Uterus (tissue), 4 donors: ENCODE measurements at regions of chr3 and their contacts with region 1.

Region 1: GRCh38 chr3:12135029-12135657 is 23.6 kb downstream of the TIMP4 start:
- DNase-seq: peak; percentile 66 to 73
- H3K4me3 ChIP-seq: no peak overlapping the region
- H3K27ac ChIP-seq: peak overlapping the region in 1 of 2 donors; percentile 10
- H3K4me1 ChIP-seq: peaks cover 0 to 4% of the 10 kb centered on the region in 2 donors
- H3K27me3 ChIP-seq: no peaks in the 10 kb centered on the region
- CTCF ChIP-seq: peak; percentile 83 to 87 (median 85)
- POLR2A ChIP-seq: no peak

Region 2: GRCh38 chr3:11989383-11990038 is 145.6 kb before region 1 on chr3:
- intact Hi-C with region 1: no loop called
- DNase-seq: no peak
- H3K4me3 ChIP-seq: no peak overlapping the region
- H3K27ac ChIP-seq: no peak overlapping the region
- H3K4me1 ChIP-seq: no peaks in the 10 kb centered on the region
- H3K27me3 ChIP-seq: no peaks in the 10 kb centered on the region
- CTCF ChIP-seq: no peak
- POLR2A ChIP-seq: no peak

Region 3: DNA sequence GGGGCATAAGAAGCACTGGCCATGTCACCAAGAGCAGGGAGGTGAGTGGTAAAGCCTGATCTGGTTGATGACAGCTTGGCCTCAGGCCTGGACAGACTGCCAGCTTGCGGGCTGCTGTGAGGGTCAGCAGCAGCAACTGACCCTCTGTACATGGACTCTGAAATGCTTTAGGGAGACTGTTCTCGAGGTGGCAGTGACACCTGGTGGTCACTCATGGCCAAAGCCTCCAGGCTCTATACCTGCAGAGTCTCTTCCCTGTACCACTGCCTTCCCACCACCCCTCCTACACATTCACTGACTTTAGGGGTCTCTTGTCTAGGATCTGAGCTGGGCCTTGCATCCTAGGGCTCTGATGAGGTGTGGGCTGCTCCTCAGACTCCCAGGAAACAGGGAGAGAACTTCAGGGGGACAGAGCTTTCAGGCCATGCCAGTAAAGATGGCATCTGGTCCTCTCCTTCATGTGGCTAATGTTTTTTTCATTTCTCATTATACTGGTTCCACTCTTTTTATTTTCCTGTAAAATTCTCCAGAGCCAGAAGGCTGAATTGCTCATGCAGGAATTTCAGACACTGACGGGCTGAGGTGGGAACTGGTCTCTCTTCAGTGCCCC is 40.8 kb after region 1 on chr3:
- intact Hi-C with region 1: loop called (anchors 5 kb)
- DNase-seq: peak; percentile 54 to 67
- H3K4me3 ChIP-seq: no peak overlapping the region
- H3K27ac ChIP-seq: no peak overlapping the region
- H3K4me1 ChIP-seq: no peaks in the 10 kb centered on the region
- H3K27me3 ChIP-seq: no peaks in the 10 kb centered on the region
- CTCF ChIP-seq: peak; percentile 66 to 83 (median 74)
- POLR2A ChIP-seq: no peak

Region 4: DNA sequence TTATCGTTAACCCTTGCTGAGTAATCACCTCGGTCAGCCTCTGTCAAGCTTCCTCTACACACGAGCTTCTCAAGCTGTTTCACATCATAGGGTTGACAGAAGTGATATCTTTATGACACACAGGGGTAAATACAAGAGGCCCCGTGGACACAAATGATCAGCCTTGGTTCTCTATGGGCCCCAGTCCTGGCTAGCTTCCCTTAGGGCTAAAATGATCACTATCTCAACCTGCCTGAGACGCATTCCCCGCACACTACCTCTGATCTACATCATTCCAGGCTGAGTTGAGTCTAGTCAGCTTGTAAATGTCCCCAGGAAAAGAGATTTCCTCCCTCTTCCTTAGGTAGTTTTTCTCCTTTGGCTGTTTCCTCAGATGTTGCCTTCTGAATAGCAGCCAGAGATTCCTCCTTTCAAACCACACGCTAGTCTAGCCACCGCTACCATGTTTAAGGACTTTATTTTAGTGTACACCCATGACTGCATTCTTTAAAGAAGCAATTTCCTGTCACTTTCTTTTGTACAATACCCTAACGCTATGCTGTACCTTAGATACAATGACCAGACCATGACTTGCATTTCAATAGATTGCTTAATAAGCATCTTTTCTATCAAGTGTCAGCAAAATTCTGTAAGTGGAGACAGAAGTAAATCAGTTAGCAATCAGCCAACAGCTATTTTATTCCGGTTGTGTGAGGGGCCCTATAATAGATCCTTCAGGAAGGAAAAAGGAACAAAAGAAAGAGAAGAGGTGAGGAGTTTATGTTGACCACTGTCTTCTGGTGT is 118.6 kb after region 1 on chr3:
- intact Hi-C with region 1: no loop called
- DNase-seq: no peak
- H3K4me3 ChIP-seq: no peak overlapping the region
- H3K27ac ChIP-seq: no peak overlapping the region
- H3K4me1 ChIP-seq: no peaks in the 10 kb centered on the region
- H3K27me3 ChIP-seq: no peaks in the 10 kb centered on the region
- CTCF ChIP-seq: no peak
- POLR2A ChIP-seq: no peak

Region 5: GRCh38 chr3:12479919-12480425 is 344.8 kb after region 1 on chr3:
- intact Hi-C with region 1: loop called (anchors 5 kb)
- DNase-seq: peak in 1 of 2 donors; percentile 20
- H3K4me3 ChIP-seq: no peak overlapping the region
- H3K27ac ChIP-seq: no peak overlapping the region
- H3K4me1 ChIP-seq: peaks cover 0 to 1% of the 10 kb centered on the region in 2 donors
- H3K27me3 ChIP-seq: no peaks in the 10 kb centered on the region
- CTCF ChIP-seq: peak; percentile 75 to 88 (median 82)
- POLR2A ChIP-seq: no peak